Activated CD4-positive, alpha-beta memory T cell treated with anti-CD3 and anti-CD28 coated beads for 36 hours (primary cell): ENCODE measurements at regions of chr19 and their contacts with region 1.

Region 1: GRCh38 chr19:38618590-38619360 is at the start of gene EIF3K:
- DNase-seq: peak; percentile 99
- H3K4me3 Mint-ChIP-seq: peak within 1 kb of the TSS; percentile 99
- H3K27ac Mint-ChIP-seq: peak within 1 kb of the TSS; percentile 92
- H3K4me1 Mint-ChIP-seq: peaks cover 34% of the 10 kb centered on the region
- H3K27me3 Mint-ChIP-seq: no peaks in the 10 kb centered on the region
- total RNA-seq, gene EIF3K: 273 to 287 TPM

Region 2: GRCh38 chr19:38514812-38515633 is 103.8 kb before region 1 on chr19:
- CTCF ChIA-PET with region 1: interaction called, 20 read pairs
- POLR2A ChIA-PET with region 1: interaction called, 3 read pairs
- intact Hi-C with region 1: no loop called
- DNase-seq: peak; percentile 86
- H3K4me3 Mint-ChIP-seq: no peak overlapping the region
- H3K27ac Mint-ChIP-seq: peak overlapping the region; percentile 33
- H3K4me1 Mint-ChIP-seq: peaks cover 22% of the 10 kb centered on the region
- H3K27me3 Mint-ChIP-seq: no peaks in the 10 kb centered on the region

Region 3: GRCh38 chr19:38544034-38544958 is 74.5 kb before region 1 on chr19:
- CTCF ChIA-PET with region 1: interaction called, 24 read pairs
- POLR2A ChIA-PET with region 1: no interaction called
- intact Hi-C with region 1: loop called (anchors 1 kb)
- DNase-seq: peak; percentile 65
- H3K4me3 Mint-ChIP-seq: peak overlapping the region; percentile 51
- H3K27ac Mint-ChIP-seq: peak overlapping the region; percentile 30
- H3K4me1 Mint-ChIP-seq: peaks cover 24% of the 10 kb centered on the region
- H3K27me3 Mint-ChIP-seq: no peaks in the 10 kb centered on the region

Region 4: GRCh38 chr19:38559428-38560401 is 59.1 kb before region 1 on chr19:
- CTCF ChIA-PET with region 1: interaction called, 9 read pairs
- POLR2A ChIA-PET with region 1: no interaction called
- intact Hi-C with region 1: loop called (anchors 5 kb)
- DNase-seq: peak; percentile 77
- H3K4me3 Mint-ChIP-seq: peak overlapping the region; percentile 49
- H3K27ac Mint-ChIP-seq: peak overlapping the region; percentile 88
- H3K4me1 Mint-ChIP-seq: peaks cover 58% of the 10 kb centered on the region
- H3K27me3 Mint-ChIP-seq: peaks cover 3% of the 10 kb centered on the region

Region 5: DNA sequence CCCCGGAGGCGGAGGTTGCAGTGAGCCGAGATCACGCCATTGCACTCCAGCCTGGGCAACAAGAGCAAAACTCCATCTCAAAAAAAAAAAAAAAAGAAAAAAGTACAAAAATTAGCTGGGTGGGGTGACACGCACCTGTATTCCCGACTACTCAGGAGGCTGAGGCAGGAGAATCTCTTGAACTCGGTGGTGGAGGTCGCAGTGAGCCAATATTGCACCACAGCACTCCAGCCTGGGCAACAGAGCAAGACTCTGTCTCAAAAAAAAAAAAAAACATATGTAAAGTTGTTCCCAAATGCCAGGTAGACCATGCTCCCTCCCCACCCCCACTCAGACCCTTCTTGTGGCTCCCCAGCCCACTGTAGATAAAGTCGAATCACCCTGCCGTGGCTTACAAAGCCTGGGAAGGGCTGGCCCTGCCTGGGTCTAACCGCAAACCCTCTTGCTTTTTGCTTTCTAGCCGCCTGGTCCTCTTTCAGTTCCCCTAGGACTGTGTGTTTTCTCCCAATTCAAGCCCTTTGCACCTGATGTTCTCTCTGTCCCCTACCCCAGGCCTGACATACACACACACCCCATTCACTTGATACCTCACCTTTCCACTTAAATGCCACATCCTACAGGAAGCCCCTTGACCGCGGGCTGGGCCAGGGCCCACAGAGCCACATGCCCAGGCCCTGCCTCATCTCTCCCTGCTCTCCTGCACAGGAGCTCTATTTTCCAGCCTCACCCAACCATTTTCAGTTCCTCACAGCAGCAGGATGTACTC is 35.4 kb before region 1 on chr19:
- CTCF ChIA-PET with region 1: no interaction called
- POLR2A ChIA-PET with region 1: no interaction called
- intact Hi-C with region 1: no loop called
- DNase-seq: no peak
- H3K4me3 Mint-ChIP-seq: no peak overlapping the region
- H3K27ac Mint-ChIP-seq: peak overlapping the region; percentile 2
- H3K4me1 Mint-ChIP-seq: peaks cover 11% of the 10 kb centered on the region
- H3K27me3 Mint-ChIP-seq: no peaks in the 10 kb centered on the region

Region 6: DNA sequence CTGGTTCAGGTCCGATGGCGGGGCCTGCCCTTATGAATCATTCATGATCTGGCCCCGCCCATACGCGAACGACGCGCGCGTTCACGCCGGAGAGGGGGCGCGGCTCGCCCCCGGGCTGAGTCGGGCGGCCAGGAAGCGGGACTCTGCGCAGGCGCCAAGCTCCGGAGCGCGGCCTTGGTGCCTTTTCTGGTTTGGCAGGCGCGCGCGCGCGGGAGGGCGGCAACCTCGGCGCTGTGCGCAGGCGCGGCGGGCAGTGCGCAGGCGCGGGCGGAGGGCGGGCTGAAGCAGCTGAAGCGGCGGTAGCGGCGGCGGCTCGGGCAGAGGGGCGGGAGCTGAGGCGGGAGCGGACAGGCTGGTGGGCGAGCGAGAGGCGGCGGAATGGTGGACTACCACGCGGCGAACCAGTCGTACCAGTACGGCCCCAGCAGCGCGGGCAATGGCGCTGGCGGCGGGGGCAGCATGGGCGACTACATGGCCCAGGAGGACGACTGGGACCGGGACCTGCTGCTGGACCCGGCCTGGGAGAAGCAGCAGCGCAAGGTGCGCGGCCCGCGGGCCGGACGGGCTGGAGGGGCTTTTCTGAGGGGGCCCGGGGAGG is 28.7 kb after region 1 on chr19 and contains the start of gene ACTN4:
- CTCF ChIA-PET with region 1: interaction called, 4 read pairs
- POLR2A ChIA-PET with region 1: interaction called, 9 read pairs
- intact Hi-C with region 1: loop called (anchors 1 kb)
- DNase-seq: peak; percentile 100
- H3K4me3 Mint-ChIP-seq: peak within 1 kb of the TSS; percentile 94
- H3K27ac Mint-ChIP-seq: peak within 1 kb of the TSS; percentile 53
- H3K4me1 Mint-ChIP-seq: peaks cover 36% of the 10 kb centered on the region
- H3K27me3 Mint-ChIP-seq: no peaks in the 10 kb centered on the region
- total RNA-seq, gene ACTN4: 267 to 270 TPM

Region 7: GRCh38 chr19:38917516-38918491 is 299.0 kb after region 1 on chr19:
- CTCF ChIA-PET with region 1: no interaction called
- POLR2A ChIA-PET with region 1: no interaction called
- intact Hi-C with region 1: no loop called
- DNase-seq: no peak
- H3K4me3 Mint-ChIP-seq: no peak overlapping the region
- H3K27ac Mint-ChIP-seq: no peak overlapping the region
- H3K4me1 Mint-ChIP-seq: peaks cover 5% of the 10 kb centered on the region
- H3K27me3 Mint-ChIP-seq: no peaks in the 10 kb centered on the region